Posterior cingulate gyrus (tissue), 11 donors: ENCODE measurements at regions of chr11 and their contacts with region 1.

Region 1: GRCh38 chr11:70270104-70270876 is at the start of gene PPFIA1:
- DNase-seq: peak; percentile 88 to 99 (median 96)

Region 2: DNA sequence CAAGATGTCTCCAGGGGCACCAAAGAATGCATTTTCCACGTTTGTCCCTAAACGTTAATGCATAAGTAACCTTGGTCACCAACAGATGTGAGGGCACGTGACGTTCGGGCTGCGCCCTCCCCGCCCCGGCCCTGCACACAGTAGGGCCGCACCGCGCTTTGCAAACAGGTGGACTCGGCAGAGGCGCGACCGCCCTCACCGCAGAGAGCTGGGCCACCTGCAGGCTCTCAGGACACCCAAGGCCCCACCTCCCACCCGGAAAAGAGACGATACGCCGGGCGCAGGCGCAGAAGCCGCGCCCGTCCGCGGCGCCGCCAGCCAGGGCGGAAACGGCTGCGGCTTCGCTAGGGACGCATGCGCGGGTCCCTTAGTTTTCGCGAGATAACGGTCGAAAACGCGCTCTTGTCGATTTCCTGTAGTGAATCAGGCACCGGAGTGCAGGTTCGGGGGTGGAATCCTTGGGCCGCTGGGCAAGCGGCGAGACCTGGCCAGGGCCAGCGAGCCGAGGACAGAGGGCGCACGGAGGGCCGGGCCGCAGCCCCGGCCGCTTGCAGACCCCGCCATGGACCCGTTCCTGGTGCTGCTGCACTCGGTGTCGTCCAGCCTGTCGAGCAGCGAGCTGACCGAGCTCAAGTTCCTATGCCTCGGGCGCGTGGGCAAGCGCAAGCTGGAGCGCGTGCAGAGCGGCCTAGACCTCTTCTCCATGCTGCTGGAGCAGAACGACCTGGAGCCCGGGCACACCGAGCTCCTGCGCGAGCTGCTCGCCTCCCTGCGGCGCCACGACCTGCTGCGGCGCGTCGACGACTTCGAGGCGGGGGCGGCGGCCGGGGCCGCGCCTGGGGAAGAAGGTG is 67.2 kb before region 1 on chr11 and contains the start of gene FADD:
- intact Hi-C with region 1: loop called (anchors 5 kb)
- DNase-seq: peak; percentile 76 to 97 (median 85)

Region 3: DNA sequence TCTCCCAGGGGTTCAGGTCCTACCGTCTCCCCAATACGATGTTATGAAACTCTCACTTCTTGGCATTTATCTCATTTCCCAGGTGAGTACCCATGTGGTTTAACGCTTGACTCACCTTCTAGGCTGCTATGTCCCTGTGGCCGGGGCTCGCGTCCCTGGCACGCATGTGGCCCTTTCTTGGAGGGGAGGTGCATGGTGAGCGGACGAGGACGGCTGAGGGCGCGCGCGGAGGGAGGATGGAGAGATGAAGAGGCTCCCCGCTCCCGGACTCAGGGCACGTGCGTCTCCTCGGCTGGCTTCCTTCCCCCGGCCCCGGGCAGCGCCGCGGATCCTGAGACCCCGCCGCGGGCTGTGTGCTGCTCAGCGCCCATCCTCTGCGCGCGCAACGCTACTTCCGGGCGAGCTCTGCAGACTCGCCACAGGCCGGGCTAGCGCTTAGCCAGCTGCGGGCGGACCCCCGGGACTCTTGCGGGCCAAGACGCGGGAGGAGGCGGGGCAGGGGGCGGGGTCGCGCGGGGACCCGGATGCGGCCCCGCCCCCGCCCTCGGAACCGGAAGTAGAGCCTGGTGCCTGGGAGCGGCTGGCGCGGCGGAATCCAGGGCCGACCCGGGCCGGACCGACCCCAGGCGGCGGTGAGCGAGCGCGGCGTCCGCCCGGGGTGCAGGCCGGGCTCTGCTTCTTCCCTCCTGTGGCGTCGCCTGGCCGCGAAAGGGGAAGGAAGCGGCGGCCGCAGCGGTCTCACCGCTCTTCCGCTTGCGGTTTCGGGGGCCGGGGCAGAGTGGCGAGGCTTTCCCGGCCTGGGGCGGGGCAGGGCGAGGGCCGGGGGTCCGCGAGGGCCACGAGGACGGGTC is 127.9 kb after region 1 on chr11 and contains the start of gene CTTN:
- intact Hi-C with region 1: loop called (anchors 10 kb)
- DNase-seq: peak; percentile 67 to 96 (median 82)